Astrocyte of the cerebellum (primary cell): ENCODE measurements at regions of chr11 and their contacts with region 1.

Region 1: GRCh38 chr11:12599408-12600143 is 74.6 kb upstream of the TEAD1 start:
- DNase-seq: no peak
- H3K4me3 ChIP-seq: no peak overlapping the region
- CTCF ChIP-seq: peak; percentile 60

Region 2: GRCh38 chr11:12508151-12508751 is 91.3 kb before region 1 on chr11:
- in situ Hi-C with region 1: no loop called
- DNase-seq: peak; percentile 16
- H3K4me3 ChIP-seq: no peak overlapping the region
- CTCF ChIP-seq: no peak

Region 3: GRCh38 chr11:12552692-12553091 is 46.9 kb before region 1 on chr11:
- in situ Hi-C with region 1: loop called (anchors 5 kb)
- DNase-seq: peak; percentile 97
- H3K4me3 ChIP-seq: no peak overlapping the region
- CTCF ChIP-seq: no peak

Region 4: GRCh38 chr11:12569499-12570040 is 30.0 kb before region 1 on chr11:
- in situ Hi-C with region 1: no loop called
- DNase-seq: no peak
- H3K4me3 ChIP-seq: no peak overlapping the region
- CTCF ChIP-seq: no peak